Naive thymus-derived CD4-positive, alpha-beta T cell (primary cell): ENCODE measurements at regions of chr1 and their contacts with region 1.

Region 1: GRCh38 chr1:8878448-8879347 is at the start of gene ENO1:
- DNase-seq: peak; percentile 96 to 100 (median 99)
- ATAC-seq: peak; percentile 92
- H3K4me3 ChIP-seq: peak within 1 kb of the TSS; percentile 94
- H3K4me3 Mint-ChIP-seq: peak within 1 kb of the TSS; percentile 85 to 99 (median 94)
- H3K27ac ChIP-seq: peak within 1 kb of the TSS; percentile 90
- H3K27ac Mint-ChIP-seq: peak within 1 kb of the TSS; percentile 94 to 100 (median 97)
- H3K4me1 ChIP-seq: peaks cover 36 to 38% of the 10 kb centered on the region in 2 donors
- H3K4me1 Mint-ChIP-seq: peaks cover 21 to 48% (median 43%) of the 10 kb centered on the region in 7 donors
- H3K27me3 ChIP-seq: no peaks in the 10 kb centered on the region
- H3K27me3 Mint-ChIP-seq: peaks cover 0 to 3% (median 0%) of the 10 kb centered on the region in 5 donors
- total RNA-seq, gene ENO1: 198 to 3,569 (median 264) TPM

Region 2: GRCh38 chr1:7930645-7931445 is 947.9 kb before region 1 on chr1:
- CTCF ChIA-PET with region 1: no interaction called
- POLR2A ChIA-PET with region 1: no interaction called
- intact Hi-C with region 1: no loop called
- DNase-seq: no peak
- ATAC-seq: peak; percentile 72
- H3K4me3 ChIP-seq: peak overlapping the region; percentile 10
- H3K4me3 Mint-ChIP-seq: peak overlapping the region; percentile 42 to 66 (median 58)
- H3K27ac ChIP-seq: no peak overlapping the region
- H3K27ac Mint-ChIP-seq: peak overlapping the region in 6 of 9 donors; percentile 5 to 67 (median 52)
- H3K4me1 ChIP-seq: peaks cover 13 to 17% of the 10 kb centered on the region in 2 donors
- H3K4me1 Mint-ChIP-seq: peaks cover 19 to 26% (median 24%) of the 10 kb centered on the region in 7 donors
- H3K27me3 ChIP-seq: no peaks in the 10 kb centered on the region
- H3K27me3 Mint-ChIP-seq: peaks cover 0 to 6% (median 0%) of the 10 kb centered on the region in 5 donors

Region 3: DNA sequence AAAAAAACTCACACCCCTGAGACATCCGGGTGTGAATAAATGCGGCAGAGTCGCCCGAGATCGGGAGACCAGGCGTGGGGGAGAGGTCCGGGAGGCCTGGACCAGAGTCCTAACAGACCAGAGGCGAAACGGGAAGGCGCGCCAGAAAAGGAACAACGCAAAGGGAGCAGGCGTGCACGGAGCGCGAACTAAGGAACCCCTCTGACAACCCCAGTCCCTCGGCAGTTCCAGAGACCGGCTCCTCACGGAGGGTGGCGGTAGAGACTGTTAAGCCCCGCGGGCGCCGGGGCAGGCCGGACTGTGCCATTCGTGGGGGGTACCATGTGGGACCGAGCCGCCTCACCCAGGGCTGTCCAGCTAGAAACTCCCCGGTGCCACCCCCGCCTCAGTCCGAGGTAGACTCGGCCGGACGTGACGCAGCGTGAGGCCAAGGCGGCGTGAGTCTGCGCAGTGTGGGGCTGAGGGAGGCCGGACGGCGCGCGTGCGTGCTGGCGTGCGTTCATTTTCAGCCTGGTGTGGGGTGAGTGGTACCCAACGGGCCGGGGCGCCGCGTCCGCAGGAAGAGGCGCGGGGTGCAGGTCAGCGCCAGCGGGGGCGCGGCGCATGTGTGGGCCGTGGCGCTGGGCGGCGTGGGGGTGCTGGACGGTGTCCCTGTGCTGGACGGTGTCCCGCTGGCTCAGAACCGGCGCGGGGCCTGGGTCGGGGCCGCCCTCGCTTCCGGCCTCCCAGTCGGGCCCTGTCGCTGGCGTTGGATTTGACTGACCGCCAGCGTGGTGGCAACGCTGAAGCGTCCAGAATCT is 917.3 kb before region 1 on chr1 and contains the start of gene PARK7:
- CTCF ChIA-PET with region 1: no interaction called
- POLR2A ChIA-PET with region 1: no interaction called
- intact Hi-C with region 1: loop called in 1 of 2 experiments (anchors 1 kb)
- DNase-seq: peak; percentile 97 to 100 (median 99)
- ATAC-seq: peak; percentile 99
- H3K4me3 ChIP-seq: peak within 1 kb of the TSS; percentile 65
- H3K4me3 Mint-ChIP-seq: peak within 1 kb of the TSS; percentile 84 to 100 (median 98)
- H3K27ac ChIP-seq: peak within 1 kb of the TSS; percentile 95
- H3K27ac Mint-ChIP-seq: peak within 1 kb of the TSS; percentile 97 to 100 (median 99)
- H3K4me1 ChIP-seq: peaks cover 28 to 44% of the 10 kb centered on the region in 2 donors
- H3K4me1 Mint-ChIP-seq: peaks cover 16 to 80% (median 58%) of the 10 kb centered on the region in 7 donors
- H3K27me3 ChIP-seq: no peaks in the 10 kb centered on the region
- H3K27me3 Mint-ChIP-seq: no peaks in the 10 kb centered on the region
- total RNA-seq, gene PARK7: 97.1 to 255 (median 106) TPM

Region 4: GRCh38 chr1:8858888-8859706 is 19.6 kb before region 1 on chr1:
- CTCF ChIA-PET with region 1: interaction called, 10 read pairs
- POLR2A ChIA-PET with region 1: interaction called, 55 read pairs
- intact Hi-C with region 1: loop called (anchors 1 to 2 kb)
- DNase-seq: peak in 7 of 9 donors; percentile 52 to 73 (median 61)
- ATAC-seq: peak; percentile 83
- H3K4me3 ChIP-seq: no peak overlapping the region
- H3K4me3 Mint-ChIP-seq: peak overlapping the region in 1 of 10 donors; percentile 61
- H3K27ac ChIP-seq: no peak overlapping the region
- H3K27ac Mint-ChIP-seq: peak overlapping the region; percentile 45 to 89 (median 78)
- H3K4me1 ChIP-seq: no peaks in the 10 kb centered on the region
- H3K4me1 Mint-ChIP-seq: peaks cover 0 to 48% (median 10%) of the 10 kb centered on the region in 7 donors
- H3K27me3 ChIP-seq: no peaks in the 10 kb centered on the region
- H3K27me3 Mint-ChIP-seq: no peaks in the 10 kb centered on the region

Region 5: GRCh38 chr1:8913111-8913856 is 34.6 kb after region 1 on chr1:
- CTCF ChIA-PET with region 1: no interaction called
- POLR2A ChIA-PET with region 1: interaction called, 4 read pairs
- intact Hi-C with region 1: loop called (anchors 5 kb)
- DNase-seq: no peak
- ATAC-seq: no peak
- H3K4me3 ChIP-seq: no peak overlapping the region
- H3K4me3 Mint-ChIP-seq: no peak overlapping the region
- H3K27ac ChIP-seq: no peak overlapping the region
- H3K27ac Mint-ChIP-seq: peak overlapping the region in 2 of 9 donors; percentile 3 to 20
- H3K4me1 ChIP-seq: peaks cover 0 to 2% of the 10 kb centered on the region in 2 donors
- H3K4me1 Mint-ChIP-seq: peaks cover 4 to 36% (median 5%) of the 10 kb centered on the region in 7 donors
- H3K27me3 ChIP-seq: no peaks in the 10 kb centered on the region
- H3K27me3 Mint-ChIP-seq: peaks cover 0 to 4% (median 0%) of the 10 kb centered on the region in 5 donors

Region 6: GRCh38 chr1:8970870-8971337 is 92.2 kb after region 1 on chr1:
- CTCF ChIA-PET with region 1: interaction called, 3 read pairs
- POLR2A ChIA-PET with region 1: interaction called, 9 read pairs
- intact Hi-C with region 1: loop called (anchors 1 to 2 kb)
- DNase-seq: peak in 8 of 9 donors; percentile 59 to 84 (median 76)
- ATAC-seq: peak; percentile 91
- H3K4me3 ChIP-seq: peak overlapping the region; percentile 59
- H3K4me3 Mint-ChIP-seq: peak overlapping the region; percentile 94 to 100 (median 100)
- H3K27ac ChIP-seq: peak overlapping the region; percentile 87
- H3K27ac Mint-ChIP-seq: peak overlapping the region; percentile 89 to 99 (median 98)
- H3K4me1 ChIP-seq: peaks cover 7 to 22% of the 10 kb centered on the region in 2 donors
- H3K4me1 Mint-ChIP-seq: peaks cover 34 to 60% (median 52%) of the 10 kb centered on the region in 7 donors
- H3K27me3 ChIP-seq: no peaks in the 10 kb centered on the region
- H3K27me3 Mint-ChIP-seq: no peaks in the 10 kb centered on the region

Region 7: DNA sequence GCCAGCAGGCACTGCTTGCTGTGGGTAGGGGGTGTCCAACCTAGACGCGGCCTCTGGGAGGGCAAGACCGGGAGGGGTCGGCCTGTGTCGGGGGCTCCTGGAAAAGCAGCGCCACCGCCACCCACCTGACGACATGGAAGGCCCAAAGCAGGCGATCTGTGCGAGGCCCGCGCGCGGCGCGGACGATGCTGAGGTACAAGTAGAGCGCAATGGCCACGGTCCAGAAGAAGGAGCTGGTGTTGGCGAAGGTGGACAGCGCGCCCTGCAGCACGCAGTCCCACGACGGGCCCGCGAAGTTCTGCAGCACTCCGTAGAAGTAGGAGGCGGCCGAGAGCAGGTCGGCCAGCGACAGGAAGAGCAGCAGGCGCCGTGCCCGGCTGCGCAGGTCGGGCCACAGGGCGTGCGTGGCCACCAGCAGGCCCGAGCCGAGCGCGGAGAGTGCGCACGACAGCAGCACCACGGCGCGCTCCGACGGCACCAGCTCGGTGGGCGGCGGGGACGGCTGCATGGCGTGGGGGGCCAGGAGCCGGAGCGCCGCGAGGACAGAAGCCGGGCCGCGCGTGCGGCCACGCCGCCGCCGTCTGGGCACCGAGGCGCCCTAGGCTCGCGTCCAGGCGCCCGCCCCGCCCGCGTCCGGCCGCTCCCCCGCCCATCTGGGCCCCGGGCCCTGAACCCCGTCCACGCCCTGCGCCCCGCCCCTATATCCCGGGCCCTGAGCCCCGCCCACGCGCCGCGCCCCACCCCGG is 250.0 kb after region 1 on chr1 and contains the start of gene GPR157:
- CTCF ChIA-PET with region 1: interaction called, 3 read pairs
- POLR2A ChIA-PET with region 1: interaction called, 6 read pairs
- intact Hi-C with region 1: loop called (anchors 1 to 2 kb)
- DNase-seq: peak; percentile 53 to 82 (median 70)
- ATAC-seq: peak; percentile 95
- H3K4me3 ChIP-seq: peak within 1 kb of the TSS; percentile 67
- H3K4me3 Mint-ChIP-seq: peak within 1 kb of the TSS; percentile 85 to 95 (median 90)
- H3K27ac ChIP-seq: peak within 1 kb of the TSS; percentile 67
- H3K27ac Mint-ChIP-seq: peak within 1 kb of the TSS; percentile 59 to 94 (median 87)
- H3K4me1 ChIP-seq: peaks cover 8 to 24% of the 10 kb centered on the region in 2 donors
- H3K4me1 Mint-ChIP-seq: peaks cover 19 to 40% (median 32%) of the 10 kb centered on the region in 7 donors
- H3K27me3 ChIP-seq: no peaks in the 10 kb centered on the region
- H3K27me3 Mint-ChIP-seq: peaks cover 0 to 25% (median 0%) of the 10 kb centered on the region in 5 donors
- total RNA-seq, gene GPR157: 4.0 to 14.1 (median 5.9) TPM

Region 8: GRCh38 chr1:9145021-9145668 is 266.4 kb after region 1 on chr1:
- CTCF ChIA-PET with region 1: no interaction called
- POLR2A ChIA-PET with region 1: no interaction called
- intact Hi-C with region 1: no loop called
- DNase-seq: no peak
- ATAC-seq: no peak
- H3K4me3 ChIP-seq: no peak overlapping the region
- H3K4me3 Mint-ChIP-seq: no peak overlapping the region
- H3K27ac ChIP-seq: no peak overlapping the region
- H3K27ac Mint-ChIP-seq: no peak overlapping the region
- H3K4me1 ChIP-seq: no peaks in the 10 kb centered on the region
- H3K4me1 Mint-ChIP-seq: peaks cover 0 to 7% (median 4%) of the 10 kb centered on the region in 7 donors
- H3K27me3 ChIP-seq: no peaks in the 10 kb centered on the region
- H3K27me3 Mint-ChIP-seq: no peaks in the 10 kb centered on the region

Region 9: DNA sequence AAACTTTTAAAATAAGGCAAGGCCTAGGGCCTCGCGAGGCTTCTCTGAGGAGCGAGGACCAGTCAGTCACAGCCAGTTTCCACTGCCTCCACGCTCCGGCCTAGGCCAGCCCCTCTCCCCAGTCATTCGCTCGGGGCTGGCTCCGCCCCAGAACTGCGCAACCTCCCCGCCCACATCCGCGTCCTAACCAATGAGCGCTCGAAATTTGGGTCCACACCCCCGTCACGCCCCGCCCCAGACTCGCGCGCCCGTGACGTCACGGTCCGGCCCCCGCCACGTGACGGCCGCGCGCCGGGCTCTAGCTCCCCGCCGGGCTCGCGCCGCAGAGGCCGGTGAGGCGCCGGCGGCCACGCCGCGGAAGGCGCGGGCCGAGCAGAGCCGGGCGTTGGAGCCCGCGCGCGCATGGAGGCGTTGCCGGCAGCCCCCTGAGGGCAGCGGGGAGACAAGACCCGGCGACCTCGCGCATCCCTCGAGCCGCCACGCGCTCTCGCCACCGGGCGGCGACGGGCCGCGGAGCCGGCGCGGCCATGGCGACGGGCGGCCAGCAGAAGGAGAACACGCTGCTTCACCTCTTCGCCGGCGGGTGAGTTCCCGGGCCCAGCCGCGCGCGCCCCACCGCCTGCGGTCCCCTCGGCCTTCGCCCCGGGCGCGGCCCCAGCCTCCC is 660.6 kb after region 1 on chr1 and contains the start of gene SLC25A33:
- CTCF ChIA-PET with region 1: no interaction called
- POLR2A ChIA-PET with region 1: no interaction called
- intact Hi-C with region 1: loop called in 1 of 2 experiments (anchors 2 kb)
- DNase-seq: peak; percentile 92 to 99 (median 95)
- ATAC-seq: peak; percentile 99
- H3K4me3 ChIP-seq: peak within 1 kb of the TSS; percentile 58
- H3K4me3 Mint-ChIP-seq: peak within 1 kb of the TSS; percentile 86 to 93 (median 90)
- H3K27ac ChIP-seq: peak within 1 kb of the TSS; percentile 73
- H3K27ac Mint-ChIP-seq: peak within 1 kb of the TSS; percentile 85 to 97 (median 91)
- H3K4me1 ChIP-seq: peaks cover 5 to 8% of the 10 kb centered on the region in 2 donors
- H3K4me1 Mint-ChIP-seq: peaks cover 18 to 38% (median 31%) of the 10 kb centered on the region in 7 donors
- H3K27me3 ChIP-seq: no peaks in the 10 kb centered on the region
- H3K27me3 Mint-ChIP-seq: no peaks in the 10 kb centered on the region
- total RNA-seq, gene SLC25A33: 2.5 to 5.8 (median 3.9) TPM